Prostate gland (tissue), 2 donors: ENCODE measurements at regions of chr5 and their contacts with region 1.

Region 1: DNA sequence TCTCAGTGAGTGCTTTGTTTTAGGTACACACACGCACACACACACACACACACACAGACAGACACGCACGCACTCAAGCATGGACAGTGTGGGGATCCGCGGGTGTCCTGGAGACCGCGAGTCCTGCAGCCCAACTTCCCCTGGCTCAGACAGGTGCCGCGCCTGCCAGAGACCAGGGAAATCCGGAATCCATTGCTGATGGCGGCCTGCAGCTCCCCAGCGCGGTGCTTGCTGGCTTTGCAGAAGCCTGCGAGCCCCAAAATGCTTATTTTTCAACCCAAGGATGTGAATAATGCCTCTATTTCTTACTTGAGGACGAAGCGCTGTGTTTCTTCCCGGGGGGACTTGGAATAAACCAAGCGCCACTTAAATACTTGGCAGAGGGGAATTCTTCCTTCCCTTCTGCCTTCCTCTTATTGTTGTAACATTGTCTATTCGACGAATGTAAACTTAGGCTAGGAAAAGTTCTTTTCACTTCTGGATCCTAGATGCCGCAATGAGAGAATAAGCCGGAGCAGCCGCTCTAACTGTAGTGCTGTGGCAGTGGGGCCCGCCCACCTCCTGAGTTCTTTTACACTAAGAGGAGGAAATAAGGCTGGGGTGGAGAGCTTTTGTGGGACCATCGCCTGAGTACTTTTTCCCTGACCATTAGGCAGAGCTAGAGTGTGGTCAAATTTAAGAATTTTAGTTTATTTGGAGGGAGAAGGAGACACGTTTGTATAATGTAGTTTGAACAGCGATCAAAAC is 802 bp downstream of the ITGA2 start:
- DNase-seq: peak; percentile 51
- H3K4me3 ChIP-seq: peak overlapping the region; percentile 53 to 57
- H3K27ac ChIP-seq: peak overlapping the region; percentile 67 to 73
- H3K4me1 ChIP-seq: no peaks in the 10 kb centered on the region
- H3K27me3 ChIP-seq: no peaks in the 10 kb centered on the region
- CTCF ChIP-seq: peak in 2 of 4 experiments; percentile 19 to 24
- POLR2A ChIP-seq: no peak

Region 2: GRCh38 chr5:52948418-52949076 is 41.4 kb before region 1 on chr5:
- intact Hi-C with region 1: loop called (anchors 2 kb)
- DNase-seq: peak; percentile 76
- H3K4me3 ChIP-seq: no peak overlapping the region
- H3K27ac ChIP-seq: peak overlapping the region; percentile 17 to 37
- H3K4me1 ChIP-seq: no peaks in the 10 kb centered on the region
- H3K27me3 ChIP-seq: no peaks in the 10 kb centered on the region
- CTCF ChIP-seq: peak; percentile 36 to 92 (median 80)
- POLR2A ChIP-seq: no peak